HepG2 (cell line): ENCODE measurements at regions of chr3 and their contacts with region 1.

Region 1: DNA sequence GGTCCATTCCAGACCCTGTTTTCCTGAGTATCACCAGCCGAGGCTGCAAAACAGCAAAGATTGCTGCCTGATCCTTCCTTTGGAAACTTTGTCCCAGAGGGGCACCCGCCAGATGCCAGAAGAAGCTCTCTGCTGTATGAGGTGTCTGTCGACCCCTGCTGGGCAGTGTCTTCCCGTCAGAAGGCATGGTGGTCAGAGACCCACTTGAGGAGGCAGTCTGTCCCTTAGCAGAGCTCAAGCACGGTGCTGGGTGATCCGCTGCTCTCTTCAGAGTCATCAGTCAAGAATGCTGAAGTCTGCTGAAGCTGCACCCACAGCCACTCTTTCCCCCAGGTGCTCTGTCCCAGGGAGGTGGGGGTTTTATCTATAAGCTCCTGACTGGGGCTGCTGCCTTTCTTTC is 1121.2 kb downstream of the NSUN3 start:
- DNase-seq: peak; percentile 2
- ATAC-seq: no peak
- H3K4me3 ChIP-seq: no peak overlapping the region
- H3K27ac ChIP-seq: no peak overlapping the region
- H3K4me1 ChIP-seq: no peaks in the 10 kb centered on the region
- H3K27me3 ChIP-seq: no peaks in the 10 kb centered on the region
- CTCF ChIP-seq: peak; percentile 41
- EP300 ChIP-seq: no peak
- POLR2A ChIP-seq: no peak
- RAD21 ChIP-seq: no peak

Region 2: DNA sequence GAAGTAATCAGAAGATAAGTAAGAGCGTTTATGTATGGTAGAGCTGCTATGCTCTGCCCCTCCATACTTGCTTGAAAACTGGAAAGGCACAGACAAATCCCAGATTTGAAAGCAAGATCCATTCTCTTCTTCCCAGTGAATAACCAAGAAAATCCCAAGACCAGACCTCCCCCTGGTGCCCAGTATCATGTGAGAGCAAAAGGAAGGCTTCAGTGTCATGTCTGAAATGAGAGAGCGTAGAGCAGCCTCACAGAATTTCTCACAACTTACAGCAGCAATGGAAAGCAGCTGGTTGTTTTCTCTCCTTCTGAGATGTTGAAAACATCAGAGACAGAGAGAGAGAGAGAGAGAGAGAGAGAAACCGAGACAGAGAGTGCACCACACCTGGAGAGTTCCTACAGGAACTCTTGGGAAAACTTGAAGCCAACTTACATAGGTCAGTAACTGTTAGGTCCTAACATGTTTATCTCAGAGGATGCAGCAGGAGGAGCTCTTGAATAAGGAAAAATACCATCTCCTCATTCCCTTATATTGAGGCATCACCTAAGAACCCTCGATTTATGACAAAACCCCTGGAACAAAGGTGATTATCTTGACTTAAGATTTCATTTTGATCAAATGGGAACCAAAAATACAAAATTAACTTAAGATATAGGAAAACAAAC is 847.9 kb before region 1 on chr3:
- CTCF ChIA-PET with region 1: no interaction called
- POLR2A ChIA-PET with region 1: no interaction called
- in situ Hi-C with region 1: no loop called
- intact Hi-C with region 1: loop called (anchors 2 kb)
- DNase-seq: peak; percentile 18
- ATAC-seq: peak; percentile 79
- H3K4me3 ChIP-seq: no peak overlapping the region
- H3K27ac ChIP-seq: no peak overlapping the region
- H3K4me1 ChIP-seq: no peaks in the 10 kb centered on the region
- H3K27me3 ChIP-seq: no peaks in the 10 kb centered on the region
- CTCF ChIP-seq: peak; percentile 58
- EP300 ChIP-seq: no peak
- POLR2A ChIP-seq: no peak
- RAD21 ChIP-seq: no peak

Region 3: DNA sequence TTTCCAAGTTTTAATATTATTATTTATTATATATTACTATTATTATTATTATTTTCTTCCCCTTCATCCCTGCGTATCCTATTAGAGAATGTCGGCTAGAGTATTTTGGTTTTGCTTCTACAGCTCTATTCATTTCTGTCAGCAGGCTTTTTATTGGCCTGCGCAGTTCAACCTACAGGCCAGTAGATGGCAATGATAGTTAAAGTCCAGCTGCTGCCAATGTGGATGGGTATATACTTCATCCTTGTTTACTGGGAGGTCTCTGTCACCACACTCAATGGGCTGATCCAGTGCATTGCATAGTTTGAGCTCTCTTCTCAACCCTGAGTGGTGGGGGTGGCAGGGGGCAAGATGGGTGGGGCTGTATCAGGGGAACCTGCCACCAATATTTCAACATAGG is 321.3 kb before region 1 on chr3:
- CTCF ChIA-PET with region 1: no interaction called
- POLR2A ChIA-PET with region 1: no interaction called
- in situ Hi-C with region 1: no loop called
- intact Hi-C with region 1: loop called (anchors 2 kb)
- DNase-seq: peak; percentile 25
- ATAC-seq: peak; percentile 84
- H3K4me3 ChIP-seq: no peak overlapping the region
- H3K27ac ChIP-seq: no peak overlapping the region
- H3K4me1 ChIP-seq: no peaks in the 10 kb centered on the region
- H3K27me3 ChIP-seq: no peaks in the 10 kb centered on the region
- CTCF ChIP-seq: peak; percentile 49
- EP300 ChIP-seq: no peak
- POLR2A ChIP-seq: no peak
- RAD21 ChIP-seq: no peak

Region 4: GRCh38 chr3:94887076-94887475 is 297.0 kb before region 1 on chr3:
- CTCF ChIA-PET with region 1: no interaction called
- POLR2A ChIA-PET with region 1: no interaction called
- in situ Hi-C with region 1: no loop called
- intact Hi-C with region 1: no loop called
- DNase-seq: no peak
- ATAC-seq: no peak
- H3K4me3 ChIP-seq: no peak overlapping the region
- H3K27ac ChIP-seq: no peak overlapping the region
- H3K4me1 ChIP-seq: no peaks in the 10 kb centered on the region
- H3K27me3 ChIP-seq: no peaks in the 10 kb centered on the region
- CTCF ChIP-seq: no peak
- EP300 ChIP-seq: no peak
- POLR2A ChIP-seq: no peak
- RAD21 ChIP-seq: no peak